Activated CD8-positive, alpha-beta T cell treated with anti-CD3 and anti-CD28 coated beads, Interleukin-2, amount 10 ng/mL, durations not matched to agents 7 days and 5 days (primary cell): ENCODE measurements at regions of chr20 and their contacts with region 1.

Region 1: DNA sequence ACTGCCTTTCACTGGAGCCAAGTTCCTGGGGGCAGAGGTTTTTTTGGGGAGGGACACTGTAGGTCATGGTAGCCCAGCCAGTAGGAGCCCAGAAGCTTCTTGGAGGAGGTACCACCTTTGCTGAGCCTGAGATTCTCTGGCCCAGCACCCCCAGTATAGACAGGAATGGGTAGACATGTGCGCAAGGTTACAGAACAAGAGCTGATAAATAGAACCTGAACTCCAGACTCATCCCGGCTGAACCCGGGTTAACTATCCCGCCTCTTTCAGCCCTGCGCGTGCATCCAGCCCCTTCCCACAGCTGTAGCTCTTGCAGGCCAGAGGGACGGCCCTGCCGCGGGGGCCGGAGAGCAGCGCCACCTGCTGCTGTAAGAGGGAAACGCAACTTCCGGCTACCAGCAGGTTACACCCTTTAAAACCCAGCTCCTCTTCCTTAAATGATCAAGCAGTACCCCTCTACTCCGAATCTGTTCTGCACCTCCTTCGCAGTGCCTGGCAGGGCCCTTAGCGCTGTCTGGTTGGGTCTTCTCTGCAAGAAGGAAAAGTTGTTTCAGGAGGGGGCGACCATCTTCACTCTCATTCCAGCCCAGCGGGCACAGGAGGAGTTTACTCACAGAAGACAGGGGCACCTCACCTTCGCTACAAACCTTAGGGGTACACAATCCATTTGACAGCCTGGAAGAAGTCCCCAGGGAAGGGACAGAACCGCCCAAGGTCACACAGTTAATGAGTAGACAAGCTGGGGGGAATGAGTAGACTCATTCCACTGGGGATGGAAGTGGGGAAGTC is 7.5 kb downstream of the SRXN1 start:
- DNase-seq: peak; percentile 76
- ATAC-seq: peak; percentile 75
- H3K4me3 Mint-ChIP-seq: no peak overlapping the region
- H3K27ac Mint-ChIP-seq: no peak overlapping the region
- H3K4me1 Mint-ChIP-seq: peaks cover 9% of the 10 kb centered on the region
- H3K27me3 Mint-ChIP-seq: peaks cover 20% of the 10 kb centered on the region

Region 2: GRCh38 chr20:354298-355064 is 291.0 kb before region 1 on chr20:
- CTCF ChIA-PET with region 1: interaction called, 30 read pairs
- POLR2A ChIA-PET with region 1: no interaction called
- DNase-seq: peak; percentile 87
- ATAC-seq: peak; percentile 98
- H3K4me3 Mint-ChIP-seq: no peak overlapping the region
- H3K27ac Mint-ChIP-seq: no peak overlapping the region
- H3K4me1 Mint-ChIP-seq: peaks cover 28% of the 10 kb centered on the region
- H3K27me3 Mint-ChIP-seq: peaks cover 4% of the 10 kb centered on the region

Region 3: GRCh38 chr20:362271-363254 is 282.9 kb before region 1 on chr20:
- CTCF ChIA-PET with region 1: interaction called, 30 read pairs
- POLR2A ChIA-PET with region 1: no interaction called
- DNase-seq: peak; percentile 67
- ATAC-seq: peak; percentile 49
- H3K4me3 Mint-ChIP-seq: no peak overlapping the region
- H3K27ac Mint-ChIP-seq: peak overlapping the region; percentile 28
- H3K4me1 Mint-ChIP-seq: peaks cover 42% of the 10 kb centered on the region
- H3K27me3 Mint-ChIP-seq: peaks cover 13% of the 10 kb centered on the region

Region 4: DNA sequence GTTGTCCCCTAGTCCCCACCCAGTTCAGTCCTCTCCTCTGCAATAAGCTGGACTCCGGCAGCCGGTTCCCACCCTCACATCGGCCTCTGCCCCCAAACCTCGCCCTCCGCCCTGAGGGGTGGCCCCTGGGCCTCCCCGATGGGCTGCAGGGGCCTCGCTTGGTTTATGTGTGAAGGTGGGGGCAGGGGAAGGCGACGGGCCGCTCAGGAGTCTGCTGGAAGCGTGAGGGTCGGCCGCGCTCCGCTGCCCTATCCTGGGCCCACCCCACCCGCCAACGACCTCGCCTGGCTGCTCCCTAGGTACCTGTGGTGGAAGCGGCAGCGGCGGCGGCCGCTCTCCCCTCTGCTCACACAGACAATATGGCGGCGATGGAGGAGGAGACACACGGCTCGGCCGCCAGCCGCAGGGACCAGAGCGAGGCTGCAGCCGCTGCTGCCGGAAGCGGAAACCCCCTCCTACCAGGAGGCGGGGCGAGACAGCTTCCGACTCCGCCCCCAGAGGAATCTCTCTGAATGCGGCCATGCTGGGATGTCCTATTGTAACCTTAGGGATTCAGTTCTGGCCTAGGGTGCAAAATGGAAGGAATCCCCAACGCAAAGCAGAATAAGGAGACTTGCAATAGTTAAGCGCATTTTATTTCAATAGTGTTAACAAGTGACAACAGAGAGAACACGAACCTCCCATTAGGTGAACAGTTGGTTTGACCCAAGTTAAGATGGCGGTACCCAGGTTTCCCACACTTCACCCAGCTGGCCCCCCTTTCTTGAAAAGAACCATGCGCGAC is 102.0 kb before region 1 on chr20 and contains the start of gene CSNK2A1:
- CTCF ChIA-PET with region 1: interaction called, 11 read pairs
- POLR2A ChIA-PET with region 1: no interaction called
- DNase-seq: peak; percentile 97
- ATAC-seq: peak; percentile 97
- H3K4me3 Mint-ChIP-seq: peak within 1 kb of the TSS; percentile 81
- H3K27ac Mint-ChIP-seq: peak within 1 kb of the TSS; percentile 94
- H3K4me1 Mint-ChIP-seq: peaks cover 42% of the 10 kb centered on the region
- H3K27me3 Mint-ChIP-seq: peaks cover 8% of the 10 kb centered on the region
- total RNA-seq, gene CSNK2A1: 116 to 121 TPM

Region 5: GRCh38 chr20:561437-562231 is 83.9 kb before region 1 on chr20:
- CTCF ChIA-PET with region 1: interaction called, 39 read pairs
- POLR2A ChIA-PET with region 1: no interaction called
- DNase-seq: peak; percentile 67
- ATAC-seq: peak; percentile 77
- H3K4me3 Mint-ChIP-seq: no peak overlapping the region
- H3K27ac Mint-ChIP-seq: no peak overlapping the region
- H3K4me1 Mint-ChIP-seq: no peaks in the 10 kb centered on the region
- H3K27me3 Mint-ChIP-seq: peaks cover 8% of the 10 kb centered on the region

Region 6: GRCh38 chr20:618980-619379 is 26.5 kb before region 1 on chr20:
- CTCF ChIA-PET with region 1: interaction called, 16 read pairs
- POLR2A ChIA-PET with region 1: no interaction called
- DNase-seq: no peak
- ATAC-seq: no peak
- H3K4me3 Mint-ChIP-seq: no peak overlapping the region
- H3K27ac Mint-ChIP-seq: no peak overlapping the region
- H3K4me1 Mint-ChIP-seq: no peaks in the 10 kb centered on the region
- H3K27me3 Mint-ChIP-seq: peaks cover 34% of the 10 kb centered on the region

Region 7: GRCh38 chr20:667391-667964 is 22.0 kb after region 1 on chr20:
- CTCF ChIA-PET with region 1: interaction called, 14 read pairs
- POLR2A ChIA-PET with region 1: no interaction called
- DNase-seq: peak; percentile 75
- ATAC-seq: peak; percentile 70
- H3K4me3 Mint-ChIP-seq: no peak overlapping the region
- H3K27ac Mint-ChIP-seq: no peak overlapping the region
- H3K4me1 Mint-ChIP-seq: peaks cover 18% of the 10 kb centered on the region
- H3K27me3 Mint-ChIP-seq: peaks cover 50% of the 10 kb centered on the region